ENCODE measurements at regions of chr6 and their contacts with region 1.

Region 1: DNA sequence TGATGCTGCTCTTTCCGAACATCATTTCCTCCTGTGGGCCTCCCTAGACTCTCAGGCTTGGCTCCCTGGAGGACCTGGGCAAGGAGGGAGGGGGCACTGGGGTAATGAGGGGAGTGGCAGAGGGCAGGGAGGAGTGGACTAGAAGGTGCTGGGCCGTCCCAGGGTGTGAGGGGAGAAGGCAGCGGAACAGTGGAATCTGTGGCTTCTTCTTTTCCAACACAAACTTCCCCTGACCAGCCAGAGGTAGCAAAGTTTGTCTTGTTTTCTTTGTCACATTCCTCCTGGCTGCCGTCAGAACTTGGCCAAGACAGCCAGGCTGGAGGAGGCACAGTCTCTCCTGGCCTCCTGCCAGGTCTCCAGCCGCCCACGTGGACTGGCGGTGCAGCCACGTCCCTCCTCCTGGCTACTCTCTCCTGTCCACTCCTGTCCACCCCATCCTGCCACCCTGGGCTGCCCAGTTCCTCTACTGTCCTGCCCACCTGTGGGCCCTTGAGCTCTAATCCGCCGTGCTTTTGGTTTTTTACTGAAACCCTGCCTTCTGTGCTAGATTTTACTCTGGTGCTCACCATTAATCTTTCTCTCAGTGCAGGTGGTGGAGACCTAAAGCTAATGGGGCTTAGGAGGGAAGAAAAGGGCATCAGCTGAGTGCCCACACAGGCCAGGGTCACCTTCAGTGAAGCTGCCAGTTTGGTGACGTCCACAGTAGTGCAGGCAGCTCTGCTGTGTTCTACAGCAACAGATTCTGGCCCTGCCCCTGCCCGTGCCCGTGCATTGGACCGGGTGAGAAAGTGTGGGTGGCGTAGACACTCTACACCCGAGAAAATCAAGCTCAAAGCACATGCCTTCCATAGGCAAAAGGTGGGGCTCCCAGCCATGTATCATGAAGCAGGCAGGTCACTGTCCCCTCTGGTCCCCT is 2.8 kb upstream of the CDSN start:
- DNase-seq: no peak
- H3K4me3 ChIP-seq: no peak overlapping the region
- H3K27ac ChIP-seq: no peak overlapping the region
- H3K4me1 ChIP-seq: peaks cover 9% of the 10 kb centered on the region
- H3K27me3 ChIP-seq: no peaks in the 10 kb centered on the region
- CTCF ChIP-seq: no peak

Region 2: DNA sequence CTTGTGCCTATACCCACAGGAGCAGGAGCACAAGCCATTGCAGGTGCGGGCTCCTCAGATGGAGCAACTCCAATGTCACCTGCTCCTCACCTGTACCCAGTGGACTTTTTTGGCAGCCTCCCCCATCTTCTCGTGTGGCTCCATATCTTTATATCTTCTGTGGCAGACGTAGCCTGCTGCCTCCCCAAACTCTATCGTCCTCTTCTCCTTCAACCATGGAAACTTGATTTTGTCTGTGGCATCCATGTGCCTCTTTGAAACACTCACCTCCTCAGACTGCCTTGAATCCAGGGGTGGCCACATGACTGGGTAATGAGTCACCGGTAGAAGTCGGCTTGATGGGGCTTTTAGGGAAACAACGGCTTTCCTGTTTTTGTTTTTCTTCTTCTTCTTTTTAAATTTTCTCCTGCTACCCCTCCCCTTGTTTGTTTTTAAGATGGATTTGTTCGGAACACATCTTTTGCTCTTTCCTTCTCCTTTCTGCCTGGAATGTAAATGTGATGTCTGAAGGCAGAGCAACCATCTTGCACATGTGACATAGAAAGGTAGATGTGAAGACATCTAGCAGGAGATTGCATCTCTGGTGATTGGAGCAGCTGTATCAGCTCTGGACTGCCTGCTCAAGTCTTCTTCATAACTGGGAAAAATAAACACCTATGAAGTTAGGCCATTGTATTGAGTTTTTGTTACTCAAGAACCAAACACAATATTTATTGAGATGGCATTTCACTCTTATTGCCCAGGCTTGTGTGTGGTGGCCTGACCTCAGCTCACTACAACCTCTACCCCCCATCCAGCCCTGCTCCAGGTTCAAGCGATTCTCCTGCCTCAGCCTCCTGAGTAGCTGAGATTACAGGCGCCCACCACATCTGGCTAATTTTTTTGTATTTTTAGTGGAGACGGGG is 308.7 kb before region 1 on chr6:
- CTCF ChIA-PET with region 1: no interaction called
- POLR2A ChIA-PET with region 1: interaction called, 11 read pairs
- intact Hi-C with region 1: no loop called
- DNase-seq: peak; percentile 47
- H3K4me3 ChIP-seq: no peak overlapping the region
- H3K27ac ChIP-seq: no peak overlapping the region
- H3K4me1 ChIP-seq: peaks cover 9% of the 10 kb centered on the region
- H3K27me3 ChIP-seq: no peaks in the 10 kb centered on the region
- CTCF ChIP-seq: no peak

Region 3: GRCh38 chr6:30828027-30828960 is 294.8 kb before region 1 on chr6:
- CTCF ChIA-PET with region 1: no interaction called
- POLR2A ChIA-PET with region 1: no interaction called
- intact Hi-C with region 1: no loop called
- DNase-seq: peak; percentile 90
- H3K4me3 ChIP-seq: no peak overlapping the region
- H3K27ac ChIP-seq: peak overlapping the region; percentile 40
- H3K4me1 ChIP-seq: peaks cover 5% of the 10 kb centered on the region
- H3K27me3 ChIP-seq: no peaks in the 10 kb centered on the region
- CTCF ChIP-seq: peak; percentile 96

Region 4: GRCh38 chr6:31068669-31069340 is 54.2 kb before region 1 on chr6:
- CTCF ChIA-PET with region 1: no interaction called
- POLR2A ChIA-PET with region 1: no interaction called
- intact Hi-C with region 1: no loop called
- DNase-seq: peak; percentile 88
- H3K4me3 ChIP-seq: no peak overlapping the region
- H3K27ac ChIP-seq: no peak overlapping the region
- H3K4me1 ChIP-seq: peaks cover 9% of the 10 kb centered on the region
- H3K27me3 ChIP-seq: no peaks in the 10 kb centered on the region
- CTCF ChIP-seq: peak; percentile 93